GM12878 (cell line): ENCODE measurements at regions of chr9 and their contacts with region 1.

Region 1: GRCh38 chr9:78296893-78297671 is at the start of gene PSAT1:
- DNase-seq: peak; percentile 72
- ATAC-seq: peak; percentile 98
- H3K4me3 ChIP-seq: peak within 1 kb of the TSS; percentile 83
- H3K27ac ChIP-seq: peak within 1 kb of the TSS; percentile 69
- H3K4me1 ChIP-seq: peaks cover 7% of the 10 kb centered on the region
- H3K27me3 ChIP-seq: no peaks in the 10 kb centered on the region
- CTCF ChIP-seq: peak in 1 of 3 experiments; percentile 19; a peak in 2 of 6 replicates
- EP300 ChIP-seq: no peak
- POLR2A ChIP-seq: peak; percentile 92
- RAD21 ChIP-seq: no peak
- polyA plus RNA-seq, gene PSAT1: 53.6 to 70.2 TPM

Region 2: DNA sequence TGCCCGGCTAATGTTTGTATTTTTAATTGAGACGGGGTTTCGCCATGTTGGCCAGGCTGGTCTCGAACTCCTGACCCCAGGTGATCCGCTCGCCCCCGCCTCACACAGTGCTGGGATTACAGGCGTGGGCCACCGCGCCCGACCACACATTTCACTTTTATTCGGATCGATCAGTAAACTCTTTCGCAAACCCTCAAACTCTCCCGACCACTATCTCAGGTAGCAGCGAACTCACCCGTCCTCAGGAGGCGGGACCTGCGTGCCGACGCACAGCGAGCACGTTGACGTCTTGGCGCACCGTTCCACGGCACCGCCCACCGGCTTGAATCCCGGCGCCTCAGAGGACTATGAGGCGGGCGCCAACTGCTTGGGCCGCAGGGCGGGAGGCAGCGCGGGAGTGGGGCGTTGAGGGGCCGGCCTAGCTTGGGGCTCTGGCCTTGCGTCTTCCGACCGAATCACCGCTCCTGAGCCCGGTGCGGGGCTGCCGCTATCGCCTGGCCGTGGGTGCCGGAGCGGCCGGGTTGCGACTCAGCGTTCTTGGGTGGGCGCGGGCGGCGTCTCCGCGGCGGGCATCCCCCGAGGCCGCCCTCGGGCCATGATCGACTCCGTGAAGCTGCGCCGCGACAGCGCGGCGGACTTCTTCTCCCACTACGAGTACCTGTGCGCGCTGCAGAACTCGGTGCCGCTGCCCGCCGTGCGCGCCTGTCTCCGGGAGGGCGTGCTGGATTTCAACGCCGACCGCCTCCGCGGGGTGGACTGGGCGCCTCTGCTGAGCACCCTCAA is 61.1 kb before region 1 on chr9 and contains the start of gene CEP78:
- CTCF ChIA-PET with region 1: no interaction called
- POLR2A ChIA-PET with region 1: no interaction called
- RAD21 ChIA-PET with region 1: no interaction called
- SMC1A ChIA-PET with region 1: no interaction called
- in situ Hi-C with region 1: no loop called
- intact Hi-C with region 1: loop called (anchors 2 kb)
- DNase-seq: peak; percentile 68
- ATAC-seq: peak; percentile 97
- H3K4me3 ChIP-seq: peak within 1 kb of the TSS; percentile 69
- H3K27ac ChIP-seq: peak within 1 kb of the TSS; percentile 82
- H3K4me1 ChIP-seq: no peaks in the 10 kb centered on the region; the same call in 1 of the 2 replicates
- H3K27me3 ChIP-seq: no peaks in the 10 kb centered on the region
- CTCF ChIP-seq: no peak
- EP300 ChIP-seq: no peak
- POLR2A ChIP-seq: peak; percentile 92
- RAD21 ChIP-seq: no peak
- polyA plus RNA-seq, gene CEP78: 4.1 to 9.7 TPM

Region 3: GRCh38 chr9:78351816-78352215 is 54.7 kb after region 1 on chr9:
- CTCF ChIA-PET with region 1: no interaction called
- POLR2A ChIA-PET with region 1: no interaction called
- RAD21 ChIA-PET with region 1: no interaction called
- SMC1A ChIA-PET with region 1: no interaction called
- in situ Hi-C with region 1: no loop called
- intact Hi-C with region 1: no loop called
- DNase-seq: no peak
- ATAC-seq: peak; percentile 72
- H3K4me3 ChIP-seq: no peak overlapping the region
- H3K27ac ChIP-seq: no peak overlapping the region
- H3K4me1 ChIP-seq: no peaks in the 10 kb centered on the region
- H3K27me3 ChIP-seq: no peaks in the 10 kb centered on the region
- CTCF ChIP-seq: no peak
- EP300 ChIP-seq: no peak
- POLR2A ChIP-seq: no peak
- RAD21 ChIP-seq: no peak